ENCODE measurements at regions of chr15 and their contacts with region 1.

Region 1: DNA sequence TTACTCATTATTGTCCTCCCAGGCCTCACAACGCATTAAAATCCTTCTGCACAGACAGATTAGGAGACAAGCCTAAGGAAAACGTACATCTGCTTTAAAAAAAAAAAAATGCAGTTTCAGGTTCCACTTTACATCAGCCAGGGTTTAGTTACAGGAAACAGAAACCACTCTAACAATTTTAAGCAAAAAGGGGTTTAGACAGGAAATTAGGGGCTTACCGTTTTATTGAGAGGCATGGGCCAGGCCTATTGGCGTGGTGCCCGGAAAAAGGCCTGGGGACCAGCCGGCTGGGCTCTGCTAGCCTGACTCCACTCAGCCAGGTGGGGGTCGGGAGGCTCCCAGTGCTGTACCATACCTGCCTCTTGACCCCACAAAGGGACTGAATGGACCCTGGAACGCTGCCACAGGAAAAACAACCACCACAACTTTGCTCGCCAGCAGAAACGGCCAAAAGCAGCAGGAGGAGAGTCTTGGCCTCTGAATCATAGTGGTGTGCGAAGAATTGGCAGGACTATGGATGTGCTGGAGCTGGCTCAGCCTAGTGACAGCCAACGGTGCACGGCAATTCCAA is 124.3 kb downstream of the CHSY1 start:
- DNase-seq: peak; percentile 51
- ATAC-seq: peak; percentile 82
- H3K4me3 Mint-ChIP-seq: peak overlapping the region; percentile 79
- H3K27ac Mint-ChIP-seq: peak overlapping the region; percentile 98
- H3K4me1 Mint-ChIP-seq: peaks cover 75% of the 10 kb centered on the region
- H3K27me3 Mint-ChIP-seq: no peaks in the 10 kb centered on the region
- CTCF ChIP-seq: no peak

Region 2: DNA sequence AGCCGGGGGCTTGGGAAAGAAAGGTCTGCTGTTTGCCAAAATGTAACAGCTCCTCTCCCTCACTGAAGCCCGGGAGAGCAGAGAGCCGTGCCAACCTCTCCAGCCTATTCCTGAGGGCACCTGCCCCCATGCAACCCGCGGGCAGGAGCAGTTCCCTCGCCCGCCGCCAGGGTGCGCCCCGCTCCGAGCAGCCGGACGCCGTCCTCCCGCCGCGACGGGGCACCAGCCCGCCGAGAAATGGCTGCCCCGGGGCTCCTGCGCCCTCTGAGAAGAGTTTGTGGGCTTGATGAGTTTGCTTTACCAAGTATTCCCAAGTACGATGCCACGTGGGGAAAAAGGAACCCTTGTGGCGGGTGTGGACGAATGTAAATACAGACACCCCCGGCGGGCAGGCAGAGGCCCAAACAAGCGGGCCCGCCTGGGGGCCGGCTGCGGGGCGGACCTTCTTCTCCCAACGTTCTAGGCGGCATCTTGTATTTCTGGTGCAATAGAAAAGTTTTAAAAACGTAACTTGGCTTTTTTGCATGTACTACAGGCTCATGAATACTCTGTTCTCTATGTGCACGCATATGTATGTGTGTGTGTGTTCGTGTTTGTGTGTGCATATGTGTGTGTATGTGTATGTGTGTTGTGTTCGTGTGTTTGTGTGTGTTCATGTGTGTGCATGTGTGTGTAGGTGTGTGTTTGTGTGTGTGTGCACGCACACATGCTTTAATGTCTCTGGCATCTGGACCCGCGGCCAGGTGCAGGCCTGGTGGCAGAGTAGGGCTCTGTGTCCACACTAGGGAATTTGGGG is 38.6 kb before region 1 on chr15:
- CTCF ChIA-PET with region 1: interaction called, 4 read pairs
- POLR2A ChIA-PET with region 1: no interaction called
- intact Hi-C with region 1: loop called (anchors 2 kb)
- DNase-seq: peak; percentile 86
- ATAC-seq: peak; percentile 98
- H3K4me3 Mint-ChIP-seq: no peak overlapping the region
- H3K27ac Mint-ChIP-seq: no peak overlapping the region
- H3K4me1 Mint-ChIP-seq: no peaks in the 10 kb centered on the region
- H3K27me3 Mint-ChIP-seq: no peaks in the 10 kb centered on the region
- CTCF ChIP-seq: peak; percentile 52

Region 3: DNA sequence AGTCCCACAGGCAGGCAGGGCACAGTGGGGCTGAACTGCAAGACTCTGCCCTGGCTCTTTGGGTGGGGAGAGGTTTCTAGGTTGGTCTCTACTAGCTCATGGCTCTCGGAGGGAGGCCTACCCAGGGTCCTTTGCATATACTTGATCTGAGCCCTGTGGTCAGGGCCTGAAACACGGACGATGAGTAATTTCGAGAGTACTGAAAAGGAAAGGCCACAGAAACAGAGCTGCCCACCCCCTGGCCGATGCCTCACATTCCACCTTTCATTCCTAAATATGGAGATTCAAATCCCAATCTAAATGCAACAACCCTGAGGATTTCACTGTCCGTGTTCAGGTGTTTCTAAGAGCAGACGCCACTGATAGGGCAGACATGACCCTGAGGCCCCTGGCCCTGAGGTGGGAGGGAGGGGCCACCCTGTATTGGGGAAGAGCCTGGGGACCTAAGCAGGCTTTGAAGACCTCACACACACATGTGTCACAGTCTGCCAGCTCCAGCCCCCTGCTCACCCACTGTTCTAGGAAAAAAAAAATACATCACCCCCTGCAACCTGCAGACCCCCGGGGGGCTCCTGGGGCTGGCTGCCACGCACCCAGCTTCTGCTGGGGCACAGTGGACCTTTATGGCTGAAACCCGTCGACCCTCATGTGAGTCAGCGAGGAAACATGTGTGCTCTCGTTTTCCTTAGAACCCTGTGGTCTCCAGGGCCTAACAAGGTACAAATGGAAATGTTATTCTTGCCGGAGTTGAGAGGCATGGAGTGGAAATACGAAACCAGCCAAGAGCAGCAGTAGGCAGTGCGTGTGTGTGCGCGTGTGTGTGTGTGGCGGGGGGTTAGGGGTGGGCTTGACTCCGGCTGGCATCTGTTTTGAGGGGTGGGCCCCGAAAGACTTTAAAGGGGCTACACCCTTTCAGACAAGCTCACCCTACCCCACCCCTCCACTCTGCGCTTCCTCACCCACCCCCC is 11.6 kb after region 1 on chr15:
- CTCF ChIA-PET with region 1: interaction called, 3 read pairs
- POLR2A ChIA-PET with region 1: interaction called, 3 read pairs
- intact Hi-C with region 1: loop called (anchors 1 kb)
- DNase-seq: no peak
- ATAC-seq: no peak
- H3K4me3 Mint-ChIP-seq: no peak overlapping the region
- H3K27ac Mint-ChIP-seq: no peak overlapping the region
- H3K4me1 Mint-ChIP-seq: peaks cover 52% of the 10 kb centered on the region
- H3K27me3 Mint-ChIP-seq: no peaks in the 10 kb centered on the region
- CTCF ChIP-seq: no peak

Region 4: DNA sequence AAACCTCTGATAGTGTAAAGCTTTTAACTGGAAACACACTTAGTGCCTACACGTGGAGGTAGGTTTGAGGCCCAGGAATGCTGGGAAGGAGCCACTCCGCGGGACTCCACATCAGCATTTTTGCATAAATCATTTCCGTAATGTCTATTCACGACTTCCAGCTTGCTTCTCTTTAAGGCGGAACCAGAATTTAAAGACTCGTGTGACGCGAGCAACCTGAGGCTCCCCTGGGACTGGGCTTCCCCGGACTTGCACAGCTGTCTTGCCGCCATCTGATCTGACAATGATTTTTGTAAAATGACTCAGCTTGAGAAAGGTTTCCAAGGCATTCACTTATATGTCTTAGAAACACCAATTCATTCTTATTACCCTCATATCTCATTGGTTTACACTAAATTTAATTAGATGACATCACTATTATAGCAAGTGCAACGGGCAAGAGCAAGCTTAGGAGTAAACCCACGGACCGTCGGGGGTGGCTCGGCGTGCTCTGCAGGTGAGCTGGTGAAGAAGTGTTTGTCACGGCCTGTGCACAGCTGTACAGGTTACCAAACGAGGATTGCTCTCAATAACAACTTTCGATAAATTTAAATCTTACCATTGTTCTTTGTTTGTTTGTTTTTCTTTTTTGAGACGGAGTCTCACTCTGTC is 29.0 kb after region 1 on chr15:
- CTCF ChIA-PET with region 1: no interaction called
- POLR2A ChIA-PET with region 1: interaction called, 6 read pairs
- intact Hi-C with region 1: loop called (anchors 1 kb)
- DNase-seq: peak; percentile 56
- ATAC-seq: peak; percentile 92
- H3K4me3 Mint-ChIP-seq: peak overlapping the region; percentile 55
- H3K27ac Mint-ChIP-seq: peak overlapping the region; percentile 25
- H3K4me1 Mint-ChIP-seq: peaks cover 24% of the 10 kb centered on the region
- H3K27me3 Mint-ChIP-seq: no peaks in the 10 kb centered on the region
- CTCF ChIP-seq: no peak

Region 5: GRCh38 chr15:101188637-101189408 is 61.2 kb after region 1 on chr15:
- CTCF ChIA-PET with region 1: no interaction called
- POLR2A ChIA-PET with region 1: no interaction called
- intact Hi-C with region 1: loop called (anchors 5 kb)
- DNase-seq: no peak
- ATAC-seq: peak; percentile 50
- H3K4me3 Mint-ChIP-seq: no peak overlapping the region
- H3K27ac Mint-ChIP-seq: no peak overlapping the region
- H3K4me1 Mint-ChIP-seq: peaks cover 31% of the 10 kb centered on the region
- H3K27me3 Mint-ChIP-seq: no peaks in the 10 kb centered on the region
- CTCF ChIP-seq: no peak

Measured in activated B cell treated with CpG ODN at 0.5 μM for 24 hours (primary cell).